ENCODE measurements at regions of chr7 and their contacts with region 1.

Region 1: DNA sequence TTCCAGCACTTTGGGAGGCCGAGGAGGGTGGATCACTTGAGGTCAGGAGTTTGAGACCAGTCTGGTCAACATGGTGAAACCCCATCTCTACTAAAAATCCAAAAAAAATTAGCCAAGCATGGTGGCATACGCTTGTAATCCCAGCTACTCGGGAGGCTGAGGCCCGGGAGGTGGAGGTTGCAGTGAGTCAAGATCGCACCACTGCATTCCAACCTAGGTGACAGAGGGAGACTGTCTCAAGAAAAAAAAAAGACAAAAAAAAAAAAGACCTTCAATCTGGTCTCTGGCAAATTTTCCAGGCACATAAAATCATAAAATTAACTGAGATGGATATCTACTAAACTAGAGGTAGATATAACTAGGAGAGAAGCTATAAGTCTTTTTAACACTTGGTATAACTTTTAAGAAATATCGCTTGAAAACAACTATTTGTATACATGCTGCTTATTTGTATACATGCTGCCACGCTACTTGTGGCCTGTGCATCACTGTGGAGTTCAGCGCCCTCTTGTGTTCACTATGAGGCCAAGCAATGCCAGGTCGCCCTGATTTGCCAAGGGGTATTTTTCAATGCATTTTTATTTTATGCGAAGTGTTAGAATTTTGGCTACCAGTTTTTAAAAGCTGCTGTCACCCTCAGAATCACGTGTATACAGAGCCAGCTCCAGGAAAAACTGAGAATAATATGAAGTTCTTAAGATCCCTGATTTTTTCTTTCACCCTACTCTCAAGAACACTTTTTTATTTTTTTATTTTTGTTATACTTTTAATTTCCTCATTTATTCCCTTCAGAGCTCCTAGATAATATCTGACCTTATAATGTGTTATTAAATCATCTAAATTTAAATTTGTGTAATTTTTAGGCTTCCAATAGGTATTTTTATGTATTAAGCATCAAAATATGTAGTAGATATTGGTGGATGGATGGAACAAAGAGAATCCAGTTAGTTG is 26.7 kb downstream of the CYCS start:
- DNase-seq: peak; percentile 64 to 76
- H3K4me3 ChIP-seq: peak overlapping the region; percentile 18; the same call in 1 of the 2 replicates
- H3K27ac ChIP-seq: no peak overlapping the region
- H3K4me1 ChIP-seq: peaks cover 11% of the 10 kb centered on the region; the same call in 1 of the 2 replicates
- H3K27me3 ChIP-seq: no peaks in the 10 kb centered on the region
- CTCF ChIP-seq: peak; percentile 99

Region 2: DNA sequence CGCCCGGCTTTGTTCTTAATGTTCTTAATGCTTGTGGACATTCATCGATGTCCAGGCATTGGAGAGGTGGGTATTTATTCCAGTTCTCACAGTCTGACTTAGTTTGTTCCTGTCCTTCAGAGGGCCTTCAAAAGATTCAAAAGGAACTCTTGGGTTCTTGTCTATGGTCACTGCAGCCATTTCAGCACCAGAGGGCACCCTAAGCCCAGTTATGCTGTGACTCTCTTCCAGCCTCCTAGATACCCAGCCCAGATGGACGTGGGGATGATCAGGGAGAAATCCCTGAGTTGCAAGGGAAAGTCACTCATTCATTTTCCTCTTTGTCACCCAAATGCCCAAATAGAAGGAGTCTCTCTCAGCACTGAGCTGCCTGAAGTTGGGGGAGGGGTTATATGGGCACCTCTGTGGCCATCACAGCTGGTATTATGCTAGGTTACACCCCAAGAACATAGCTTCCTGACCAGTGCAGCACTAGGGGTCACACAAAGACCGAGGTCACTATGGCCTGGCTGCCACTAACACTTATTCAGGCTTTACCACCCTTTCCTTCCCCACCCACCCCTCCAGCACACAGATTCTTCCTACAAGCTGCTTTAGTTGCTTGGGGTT is 1527.7 kb before region 1 on chr7:
- CTCF ChIA-PET with region 1: no interaction called
- POLR2A ChIA-PET with region 1: no interaction called
- intact Hi-C with region 1: loop called (anchors 1 kb)
- DNase-seq: peak; percentile 77 to 81
- H3K4me3 ChIP-seq: no peak overlapping the region
- H3K27ac ChIP-seq: no peak overlapping the region
- H3K4me1 ChIP-seq: no peaks in the 10 kb centered on the region
- H3K27me3 ChIP-seq: no peaks in the 10 kb centered on the region
- CTCF ChIP-seq: peak; percentile 96

Region 3: GRCh38 chr7:23938937-23939552 is 1159.3 kb before region 1 on chr7:
- CTCF ChIA-PET with region 1: interaction called, 3 read pairs
- POLR2A ChIA-PET with region 1: interaction called, 3 read pairs
- intact Hi-C with region 1: loop called (anchors 2 kb)
- DNase-seq: peak; percentile 25 to 60
- H3K4me3 ChIP-seq: no peak overlapping the region
- H3K27ac ChIP-seq: no peak overlapping the region
- H3K4me1 ChIP-seq: peaks cover 10% of the 10 kb centered on the region; the same call in 1 of the 2 replicates
- H3K27me3 ChIP-seq: no peaks in the 10 kb centered on the region
- CTCF ChIP-seq: peak; percentile 78

Region 4: DNA sequence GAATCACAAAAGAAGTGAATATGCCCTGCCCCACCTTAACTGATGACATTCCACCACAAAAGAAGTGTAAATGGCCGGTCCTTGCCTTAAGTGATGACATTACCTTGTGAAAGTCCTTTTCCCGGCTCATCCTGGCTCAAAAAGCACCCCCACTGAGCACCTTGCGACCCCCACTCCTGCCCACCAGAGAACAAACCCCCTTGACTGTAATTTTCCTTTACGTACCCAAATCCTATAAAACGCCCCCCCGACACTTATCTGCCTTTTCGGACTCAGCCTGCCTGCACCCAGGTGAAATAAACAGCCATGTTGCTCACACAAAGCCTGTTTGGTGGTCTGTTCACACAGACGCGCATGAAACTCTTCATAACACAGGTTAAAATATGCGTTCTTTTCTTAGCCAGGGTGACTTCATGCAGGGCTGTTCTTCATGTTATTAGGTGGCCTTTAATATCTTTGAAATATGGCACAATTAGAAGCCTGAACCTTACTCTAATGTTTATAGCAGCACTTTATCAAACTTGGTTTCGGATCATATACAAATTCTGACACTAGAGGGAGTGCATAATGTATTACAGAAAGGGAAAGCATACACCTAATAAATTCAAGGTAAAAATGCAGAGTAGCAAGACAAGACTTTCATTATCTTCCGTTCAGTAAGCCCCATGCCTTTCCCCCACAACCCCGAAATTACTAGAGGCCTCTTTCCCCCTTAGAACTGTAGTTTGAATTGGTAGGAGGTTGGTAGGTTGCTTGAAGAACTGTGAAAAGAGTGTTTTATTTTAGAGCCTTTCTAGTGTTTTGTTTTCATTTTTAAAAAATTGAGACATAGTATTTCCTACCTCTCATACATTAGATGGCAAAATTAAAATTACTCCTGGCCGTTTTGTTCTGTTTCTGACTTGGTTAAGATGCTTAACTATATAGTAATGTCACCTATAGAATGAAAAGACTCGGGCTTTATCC is 696.5 kb before region 1 on chr7:
- CTCF ChIA-PET with region 1: no interaction called
- POLR2A ChIA-PET with region 1: no interaction called
- intact Hi-C with region 1: loop called (anchors 2 kb)
- DNase-seq: peak in 1 of 2 experiments; percentile 60
- H3K4me3 ChIP-seq: peak overlapping the region; percentile 50; the same call in 1 of the 2 replicates
- H3K27ac ChIP-seq: no peak overlapping the region
- H3K4me1 ChIP-seq: 0 out of 2 replicates have a peak, but pooled peaks cover 4% of the 10 kb centered on the region
- H3K27me3 ChIP-seq: no peaks in the 10 kb centered on the region
- CTCF ChIP-seq: peak; percentile 82

Region 5: DNA sequence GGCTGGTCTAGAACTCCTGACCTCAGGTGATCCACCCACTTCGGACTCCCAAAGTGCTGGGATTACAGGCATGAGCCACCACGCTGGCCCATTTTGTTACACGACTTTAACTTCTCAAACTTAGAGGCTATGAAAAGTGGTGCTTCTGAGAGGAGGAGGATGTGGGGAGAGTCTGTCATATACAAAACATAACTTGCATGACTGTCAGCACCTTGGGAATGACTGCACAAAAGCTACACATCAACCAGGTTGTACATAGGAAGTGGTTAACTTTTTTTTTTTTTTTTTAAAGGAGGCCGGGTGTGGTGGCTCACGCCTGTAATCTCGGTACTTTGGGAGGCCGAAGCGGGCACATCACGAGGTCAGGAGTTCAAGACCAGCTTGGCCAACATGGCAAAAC is 297.7 kb before region 1 on chr7:
- CTCF ChIA-PET with region 1: interaction called, 5 read pairs
- POLR2A ChIA-PET with region 1: interaction called, 16 read pairs
- intact Hi-C with region 1: no loop called
- DNase-seq: no peak
- H3K4me3 ChIP-seq: no peak overlapping the region
- H3K27ac ChIP-seq: no peak overlapping the region
- H3K4me1 ChIP-seq: no peaks in the 10 kb centered on the region
- H3K27me3 ChIP-seq: no peaks in the 10 kb centered on the region
- CTCF ChIP-seq: no peak

Region 6: DNA sequence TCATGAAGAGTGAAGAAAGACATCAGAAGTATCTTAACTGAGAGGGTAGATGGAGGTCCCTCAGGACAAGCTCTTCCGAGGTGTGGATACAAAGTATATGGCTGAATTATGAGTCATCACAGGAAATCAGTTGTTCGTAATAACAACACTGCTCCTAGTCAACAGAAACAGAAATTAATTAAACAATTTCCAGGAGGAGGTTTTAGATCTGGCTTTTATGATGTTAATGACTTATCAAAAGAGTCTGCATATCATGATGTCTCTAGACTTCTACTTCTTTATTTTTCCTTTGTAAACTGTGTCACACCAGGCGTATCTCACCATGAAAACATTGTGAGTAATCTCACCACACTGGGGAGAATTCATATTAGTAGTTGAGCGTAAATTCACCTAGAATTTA is 149.6 kb before region 1 on chr7:
- CTCF ChIA-PET with region 1: no interaction called
- POLR2A ChIA-PET with region 1: no interaction called
- intact Hi-C with region 1: no loop called
- DNase-seq: no peak
- H3K4me3 ChIP-seq: no peak overlapping the region
- H3K27ac ChIP-seq: no peak overlapping the region
- H3K4me1 ChIP-seq: no peaks in the 10 kb centered on the region
- H3K27me3 ChIP-seq: no peaks in the 10 kb centered on the region
- CTCF ChIP-seq: no peak

Region 7: DNA sequence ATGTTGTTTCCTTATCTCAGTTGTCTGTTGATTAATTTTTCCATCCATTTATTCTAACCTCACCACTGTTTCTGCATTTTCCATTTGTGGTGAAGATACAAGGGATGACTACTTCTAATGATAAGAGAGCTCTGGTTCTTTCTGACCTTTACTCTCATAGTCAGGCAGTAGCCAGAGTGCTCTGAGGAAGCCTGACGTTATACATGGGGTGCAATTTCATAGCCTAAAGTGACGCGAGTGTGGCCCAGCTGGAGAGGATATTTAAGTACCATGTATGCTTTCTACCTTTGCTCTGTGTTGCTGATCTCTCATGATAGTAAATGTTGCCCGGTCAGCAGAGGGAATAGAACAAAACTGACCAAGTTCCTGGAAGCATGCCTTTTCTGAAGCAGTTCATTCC is 60.6 kb after region 1 on chr7:
- CTCF ChIA-PET with region 1: no interaction called
- POLR2A ChIA-PET with region 1: no interaction called
- intact Hi-C with region 1: no loop called
- DNase-seq: no peak
- H3K4me3 ChIP-seq: no peak overlapping the region
- H3K27ac ChIP-seq: no peak overlapping the region
- H3K4me1 ChIP-seq: no peaks in the 10 kb centered on the region
- H3K27me3 ChIP-seq: peaks cover 36% of the 10 kb centered on the region
- CTCF ChIP-seq: no peak

Region 8: DNA sequence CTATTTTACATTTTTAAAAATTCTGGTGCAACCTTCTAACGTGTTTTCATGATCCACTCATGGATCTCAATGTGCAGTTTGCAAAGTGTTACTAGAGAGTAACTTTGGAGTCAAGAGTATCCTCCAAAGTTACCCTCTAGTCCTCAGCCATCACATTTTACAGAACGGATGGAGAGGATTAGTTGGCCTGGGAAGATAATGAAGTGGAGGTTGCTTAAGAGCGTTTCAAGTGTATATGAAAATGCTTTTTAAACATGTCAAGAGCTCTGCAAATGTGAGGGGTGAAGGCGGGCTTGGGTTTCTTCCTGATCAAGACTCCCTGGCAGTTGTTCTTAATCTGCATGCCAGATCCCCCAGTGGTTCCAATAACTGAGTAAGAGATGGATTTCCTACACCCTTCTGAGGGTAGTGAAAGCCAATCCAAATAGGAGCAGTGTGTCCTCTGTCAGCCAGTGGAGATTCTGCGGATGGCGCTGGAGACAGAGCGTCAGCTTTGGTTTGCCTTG is 429.3 kb after region 1 on chr7:
- CTCF ChIA-PET with region 1: no interaction called
- POLR2A ChIA-PET with region 1: no interaction called
- intact Hi-C with region 1: no loop called
- DNase-seq: no peak
- H3K4me3 ChIP-seq: no peak overlapping the region
- H3K27ac ChIP-seq: no peak overlapping the region
- H3K4me1 ChIP-seq: no peaks in the 10 kb centered on the region
- H3K27me3 ChIP-seq: peaks cover 79% of the 10 kb centered on the region
- CTCF ChIP-seq: no peak

Region 9: DNA sequence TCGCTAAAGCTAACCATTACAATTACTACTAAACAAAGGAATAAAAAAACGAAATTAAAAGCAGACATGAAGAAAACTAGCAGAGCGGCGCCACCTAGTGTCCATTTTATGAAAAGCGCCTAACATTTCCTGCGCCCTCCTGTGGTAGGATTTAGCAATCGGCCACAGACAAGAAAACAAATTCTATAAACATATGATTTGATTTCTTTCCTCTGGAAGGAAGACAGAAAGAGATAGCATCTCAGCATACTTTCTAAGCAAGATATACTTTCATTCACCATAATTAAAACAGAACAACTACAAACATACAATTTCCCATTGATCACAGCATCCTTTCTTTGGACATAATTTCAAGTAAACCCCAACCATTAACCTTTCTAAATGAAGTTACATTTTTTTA is 467.6 kb after region 1 on chr7:
- CTCF ChIA-PET with region 1: no interaction called
- POLR2A ChIA-PET with region 1: no interaction called
- intact Hi-C with region 1: loop called (anchors 5 kb)
- DNase-seq: peak; percentile 66 to 67
- H3K4me3 ChIP-seq: no peak overlapping the region
- H3K27ac ChIP-seq: no peak overlapping the region
- H3K4me1 ChIP-seq: no peaks in the 10 kb centered on the region
- H3K27me3 ChIP-seq: peaks cover 45% of the 10 kb centered on the region
- CTCF ChIP-seq: peak; percentile 100